Left cardiac atrium (tissue), 4 donors: ENCODE measurements at regions of chr7 and their contacts with region 1.

Region 1: DNA sequence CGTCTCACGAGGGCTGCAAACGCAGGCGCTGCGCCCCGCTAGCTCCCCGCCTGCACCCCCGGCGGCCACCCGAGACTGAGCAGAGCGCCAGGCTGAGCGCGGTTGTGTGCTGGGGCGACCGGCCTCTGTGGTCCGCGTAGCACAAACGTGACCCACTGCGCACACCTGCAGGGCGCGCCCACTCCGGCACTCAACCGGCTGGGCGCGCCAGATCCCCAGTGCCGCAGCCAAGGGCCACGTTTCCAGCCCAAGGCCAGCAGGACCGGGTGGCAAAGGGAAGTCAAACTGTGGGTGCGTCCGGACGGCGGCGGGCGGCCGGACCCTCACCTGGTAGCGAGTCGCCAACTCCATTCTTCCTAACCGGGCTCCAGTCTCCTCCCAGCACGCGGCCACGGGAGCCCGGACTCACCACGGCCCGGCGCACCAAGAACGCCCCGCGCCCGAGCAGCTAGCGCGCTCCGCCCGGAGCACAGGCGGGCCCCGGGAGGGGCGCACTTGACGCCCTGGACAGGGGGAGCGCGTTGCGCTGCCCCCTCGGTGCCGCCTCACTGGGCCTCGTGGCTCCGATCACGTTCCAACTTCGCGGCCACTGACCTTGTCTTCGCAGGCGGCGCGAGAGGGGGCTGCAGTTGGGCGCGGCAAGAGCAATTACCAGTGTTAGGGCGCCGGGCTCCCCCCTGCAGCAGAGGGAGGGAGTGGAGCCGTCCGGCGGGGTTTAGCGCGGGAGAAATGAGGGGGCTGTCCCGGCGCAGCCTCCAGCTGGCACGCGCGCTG is at the start of gene CDCA7L:
- DNase-seq: peak; percentile 76
- ATAC-seq: peak; percentile 94 to 96
- total RNA-seq, gene CDCA7L: 23.9 to 55.7 TPM

Region 2: DNA sequence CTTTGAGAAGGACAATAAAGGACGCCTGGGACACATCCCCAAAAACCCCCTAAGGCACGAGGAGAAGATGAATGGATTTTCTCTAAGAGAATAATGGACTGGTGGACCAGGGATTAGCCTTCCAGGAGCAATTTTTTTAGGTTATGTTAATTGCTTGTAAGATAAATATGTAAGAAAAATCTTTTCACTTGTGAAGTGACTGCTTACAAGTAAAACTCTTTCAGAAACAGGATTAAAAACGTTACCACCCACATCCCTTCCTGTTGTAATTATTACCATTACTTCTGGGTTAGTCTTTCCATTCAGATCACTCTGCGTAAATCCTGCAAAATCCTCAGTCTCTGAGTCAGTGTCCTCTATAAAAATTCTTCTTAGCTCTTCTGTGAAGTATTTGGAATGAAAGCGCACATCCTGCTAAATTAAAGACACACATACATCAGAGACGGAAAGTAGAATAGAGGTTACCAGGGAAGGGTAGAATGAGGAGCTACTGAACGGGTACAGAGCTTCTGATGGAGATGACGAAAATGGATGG is 34.2 kb before region 1 on chr7:
- intact Hi-C with region 1: loop called in 1 of 2 experiments (anchors 2 kb)
- DNase-seq: no peak
- ATAC-seq: no peak